ENCODE measurements at regions of chr20 and their contacts with region 1.

Region 1: DNA sequence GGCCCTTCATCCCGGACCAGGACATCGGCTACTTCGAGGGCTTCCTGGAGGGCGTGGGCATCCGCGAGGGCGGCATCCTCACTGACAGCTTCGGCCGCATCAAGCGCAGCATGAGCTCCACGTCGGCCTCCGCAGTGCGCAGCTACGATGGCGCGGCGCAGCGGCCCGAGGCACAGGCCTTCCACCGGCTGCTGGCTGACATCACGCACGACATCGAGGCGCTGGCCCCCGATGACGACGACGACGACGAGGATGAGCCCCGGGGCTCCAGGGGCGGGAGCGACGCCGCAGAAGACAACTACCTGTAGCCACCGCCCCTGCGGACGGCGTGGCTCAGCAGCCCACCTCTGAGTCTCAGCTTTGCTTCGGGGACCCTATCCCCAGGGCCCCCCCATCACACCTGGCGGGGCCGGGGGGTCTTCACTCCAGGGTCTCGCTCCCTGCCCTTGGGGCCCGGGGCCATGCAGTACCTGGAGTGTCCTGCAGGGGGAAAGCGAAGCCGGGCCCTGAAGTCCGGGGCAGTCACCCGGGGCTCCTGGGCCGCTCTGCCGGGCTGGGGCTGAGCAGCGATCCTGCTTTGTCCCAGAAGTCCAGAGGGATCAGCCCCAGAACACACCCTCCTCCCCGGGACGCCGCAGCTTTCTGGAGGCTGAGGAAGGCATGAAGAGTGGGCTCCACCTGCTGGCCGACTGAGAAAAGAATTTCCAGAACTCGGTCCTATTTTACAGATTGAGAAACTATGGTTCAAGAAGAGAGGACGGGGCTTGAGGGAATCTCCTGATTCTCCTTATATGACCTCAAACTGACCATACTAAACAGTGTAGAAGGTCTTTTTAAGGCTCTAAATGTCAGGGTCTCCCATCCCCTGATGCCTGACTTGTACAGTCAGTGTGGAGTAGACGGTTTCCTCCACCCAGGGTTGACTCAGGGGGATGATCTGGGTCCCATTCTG is 20.8 kb upstream of the HCK start:
- DNase-seq: peak; percentile 79 to 88 (median 84)
- ATAC-seq: peak; percentile 89
- H3K4me3 ChIP-seq: no peak overlapping the region
- H3K27ac ChIP-seq: no peak overlapping the region
- H3K4me1 ChIP-seq: peaks cover 12% of the 10 kb centered on the region
- H3K27me3 ChIP-seq: peaks cover 0 to 9% of the 10 kb centered on the region in 2 donors
- CTCF ChIP-seq: peak; percentile 75 to 95 (median 87)
- POLR2A ChIP-seq: no peak

Region 2: GRCh38 chr20:31824554-31825313 is 206.5 kb before region 1 on chr20:
- intact Hi-C with region 1: loop called (anchors 5 kb)
- DNase-seq: no peak
- ATAC-seq: no peak
- H3K4me3 ChIP-seq: no peak overlapping the region
- H3K27ac ChIP-seq: no peak overlapping the region
- H3K4me1 ChIP-seq: peaks cover 32% of the 10 kb centered on the region
- H3K27me3 ChIP-seq: no peaks in the 10 kb centered on the region
- CTCF ChIP-seq: no peak
- POLR2A ChIP-seq: no peak

Region 3: DNA sequence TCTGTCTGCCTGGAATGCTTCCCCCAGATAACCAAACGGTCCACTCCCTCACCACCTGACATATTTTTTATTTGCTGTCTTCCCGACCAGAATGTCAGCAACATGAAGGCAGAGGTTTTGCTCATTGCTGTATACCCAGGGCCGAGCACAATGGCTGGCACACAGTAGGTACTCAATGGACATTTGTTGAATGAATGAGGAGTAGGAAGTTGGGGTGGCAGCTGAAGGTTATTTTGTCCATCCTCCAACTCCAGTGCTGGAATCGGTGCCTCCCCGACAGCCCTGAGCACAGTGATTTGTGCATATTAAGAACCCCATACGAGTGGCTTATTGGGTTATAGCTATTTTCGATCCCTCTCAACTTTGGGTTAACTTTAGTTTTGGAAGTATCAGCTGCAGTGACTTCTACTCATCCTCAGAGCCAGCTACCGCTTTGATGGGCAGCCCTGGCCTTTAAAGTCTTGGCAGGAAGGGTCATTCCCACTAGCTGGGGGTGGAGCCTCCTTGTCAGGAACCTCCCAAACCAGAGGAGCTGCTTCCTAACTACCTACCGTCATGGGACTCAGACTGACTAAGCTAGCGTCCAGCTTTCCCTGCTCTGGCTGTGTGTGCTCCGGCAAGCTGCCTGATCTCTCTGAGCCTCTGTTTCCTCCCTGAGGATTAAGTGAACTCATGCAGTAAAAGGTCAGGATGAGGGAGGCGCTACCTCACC is 171.1 kb before region 1 on chr20:
- intact Hi-C with region 1: loop called (anchors 10 kb)
- DNase-seq: peak; percentile 24 to 58 (median 48)
- ATAC-seq: no peak
- H3K4me3 ChIP-seq: no peak overlapping the region
- H3K27ac ChIP-seq: no peak overlapping the region
- H3K4me1 ChIP-seq: peaks cover 19% of the 10 kb centered on the region
- H3K27me3 ChIP-seq: no peaks in the 10 kb centered on the region
- CTCF ChIP-seq: no peak
- POLR2A ChIP-seq: no peak